Activated B cell treated with CpG ODN at 0.5 μM for 24 hours (primary cell): ENCODE measurements at regions of chr9 and their contacts with region 1.

Region 1: GRCh38 chr9:35657546-35658136 is at the start of gene RMRP:
- DNase-seq: peak; percentile 81
- ATAC-seq: peak; percentile 81
- H3K4me3 Mint-ChIP-seq: peak within 1 kb of the TSS; percentile 88
- H3K27ac Mint-ChIP-seq: peak within 1 kb of the TSS; percentile 99
- H3K4me1 Mint-ChIP-seq: peaks cover 78% of the 10 kb centered on the region
- H3K27me3 Mint-ChIP-seq: peaks cover 5% of the 10 kb centered on the region
- CTCF ChIP-seq: no peak
- total RNA-seq, gene RMRP: 8,247 and 9,516 TPM in 2 replicates

Region 2: GRCh38 chr9:35611230-35611797 is 46.3 kb before region 1 on chr9:
- CTCF ChIA-PET with region 1: interaction called, 127 read pairs
- POLR2A ChIA-PET with region 1: interaction called, 549 read pairs
- intact Hi-C with region 1: no loop called
- DNase-seq: no peak
- ATAC-seq: peak; percentile 94
- H3K4me3 Mint-ChIP-seq: no peak overlapping the region
- H3K27ac Mint-ChIP-seq: peak overlapping the region; percentile 54
- H3K4me1 Mint-ChIP-seq: peaks cover 66% of the 10 kb centered on the region
- H3K27me3 Mint-ChIP-seq: no peaks in the 10 kb centered on the region
- CTCF ChIP-seq: no peak

Region 3: DNA sequence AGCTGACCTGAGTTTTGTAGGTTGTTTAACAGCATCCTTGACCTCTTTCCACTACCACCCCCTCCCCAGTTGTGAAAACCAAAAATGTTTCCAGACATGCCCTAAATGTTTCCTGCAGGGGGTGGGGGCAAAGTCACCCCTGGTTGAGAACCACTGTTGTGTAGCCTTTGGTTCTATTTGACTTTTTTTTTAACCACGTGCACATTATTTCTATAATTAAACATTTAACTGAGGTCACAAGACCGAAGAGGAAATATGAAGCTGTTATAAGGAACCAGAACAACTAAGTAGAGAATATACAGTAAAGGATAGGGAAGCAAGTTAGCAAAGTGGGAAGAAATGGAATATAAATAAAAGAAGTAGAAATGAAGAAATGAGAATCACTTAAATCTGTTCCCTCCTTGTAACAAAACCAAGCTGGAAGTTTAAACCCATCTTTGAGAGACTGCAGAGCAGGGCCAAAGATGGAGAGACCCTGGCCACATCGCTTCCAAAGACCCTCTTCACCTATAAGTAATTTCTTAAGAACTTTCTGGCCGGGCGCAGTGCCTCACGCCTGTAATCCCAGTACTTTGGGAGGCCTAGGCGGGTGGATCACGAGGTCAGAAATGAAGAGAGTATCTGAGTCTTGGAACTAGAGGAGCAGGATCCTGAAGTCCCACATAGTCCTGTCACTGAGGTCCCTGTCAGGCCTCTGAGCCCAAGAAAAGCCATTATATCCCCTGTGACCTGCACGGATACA is 21.3 kb before region 1 on chr9:
- CTCF ChIA-PET with region 1: interaction called, 3 read pairs
- POLR2A ChIA-PET with region 1: interaction called, 12 read pairs
- intact Hi-C with region 1: loop called (anchors 1 kb)
- DNase-seq: no peak
- ATAC-seq: peak; percentile 64
- H3K4me3 Mint-ChIP-seq: peak overlapping the region; percentile 71
- H3K27ac Mint-ChIP-seq: peak overlapping the region; percentile 94
- H3K4me1 Mint-ChIP-seq: peaks cover 80% of the 10 kb centered on the region
- H3K27me3 Mint-ChIP-seq: no peaks in the 10 kb centered on the region
- CTCF ChIP-seq: no peak

Region 4: DNA sequence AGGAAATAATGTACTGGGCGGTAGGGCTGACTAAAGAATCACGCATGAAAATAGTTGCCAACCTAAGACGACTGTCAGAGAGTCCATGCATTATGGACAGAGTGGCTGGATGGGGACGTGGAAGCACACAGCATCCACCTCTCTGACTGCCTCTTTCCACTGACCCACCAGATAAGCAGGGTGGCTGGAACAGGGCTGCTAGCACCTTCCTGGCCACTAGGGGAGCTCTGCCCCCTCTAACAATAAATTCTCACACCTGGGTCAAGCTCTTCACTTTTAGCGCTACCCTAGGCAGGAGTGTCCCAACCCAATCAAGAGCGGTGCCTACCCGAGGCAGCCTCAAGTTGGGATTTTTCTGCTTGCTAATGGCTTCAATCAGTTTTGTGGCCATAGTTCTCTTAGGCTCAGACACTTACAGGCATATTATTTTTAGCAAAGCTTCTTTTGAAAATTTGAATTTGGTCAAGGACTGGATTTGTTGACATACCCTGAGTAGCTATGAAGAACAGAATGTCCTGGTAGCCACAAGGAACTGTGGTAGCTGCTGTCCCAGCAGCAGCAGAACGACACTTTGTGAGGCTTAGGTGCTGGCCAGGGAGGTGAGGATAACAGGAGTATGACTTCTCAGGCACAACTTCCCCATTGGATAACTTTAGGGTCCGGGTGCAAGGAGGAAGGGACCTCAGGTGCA is 39.0 kb after region 1 on chr9:
- CTCF ChIA-PET with region 1: interaction called, 36 read pairs
- POLR2A ChIA-PET with region 1: interaction called, 24 read pairs
- intact Hi-C with region 1: loop called (anchors 1 kb)
- DNase-seq: peak; percentile 50
- ATAC-seq: peak; percentile 98
- H3K4me3 Mint-ChIP-seq: no peak overlapping the region
- H3K27ac Mint-ChIP-seq: peak overlapping the region; percentile 76
- H3K4me1 Mint-ChIP-seq: peaks cover 9% of the 10 kb centered on the region
- H3K27me3 Mint-ChIP-seq: no peaks in the 10 kb centered on the region
- CTCF ChIP-seq: no peak

Region 5: GRCh38 chr9:35882263-35882848 is 224.7 kb after region 1 on chr9:
- CTCF ChIA-PET with region 1: no interaction called
- POLR2A ChIA-PET with region 1: no interaction called
- intact Hi-C with region 1: loop called (anchors 1 kb)
- DNase-seq: peak; percentile 74
- ATAC-seq: peak; percentile 58
- H3K4me3 Mint-ChIP-seq: no peak overlapping the region
- H3K27ac Mint-ChIP-seq: no peak overlapping the region
- H3K4me1 Mint-ChIP-seq: no peaks in the 10 kb centered on the region
- H3K27me3 Mint-ChIP-seq: peaks cover 10% of the 10 kb centered on the region
- CTCF ChIP-seq: no peak